ENCODE measurements at regions of chr2 and their contacts with region 1.

Region 1: DNA sequence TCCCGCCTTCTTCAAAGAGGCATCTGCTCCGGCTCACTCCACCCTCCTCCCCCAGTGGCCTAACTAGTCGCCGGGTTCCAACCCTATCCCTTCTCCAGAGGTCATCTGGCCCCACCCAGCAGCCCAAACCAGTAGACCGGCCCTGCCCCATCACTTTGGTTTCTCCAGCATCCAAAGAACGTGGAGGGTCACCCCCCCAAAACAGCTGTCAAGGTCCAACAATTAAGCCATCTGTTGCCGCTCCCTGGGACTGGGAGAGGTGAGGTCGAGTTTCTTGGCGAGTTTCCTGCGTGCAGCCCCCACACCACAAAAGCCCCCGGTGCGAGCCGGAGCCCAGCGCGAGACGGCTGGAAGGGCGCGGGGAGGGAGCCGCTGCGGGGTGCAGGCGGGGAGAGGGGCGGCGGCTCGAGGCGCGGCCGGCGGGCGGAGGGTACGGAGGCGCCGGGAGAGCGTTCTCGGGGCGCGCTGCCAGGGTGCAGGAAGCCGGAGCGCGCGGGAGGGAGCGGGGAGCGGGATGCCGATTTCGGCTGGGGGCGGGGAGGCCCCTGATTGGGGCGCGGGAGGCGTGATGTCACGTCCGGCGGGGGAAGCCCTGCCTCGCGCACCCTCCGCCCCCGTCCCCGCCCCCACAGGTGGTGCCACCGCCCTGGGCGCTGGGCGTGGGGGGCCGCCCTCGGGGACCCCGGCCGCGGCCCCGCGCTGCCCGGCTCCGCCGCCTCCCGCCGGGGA is 571 bp upstream of the GPC1 start:
- H3K4me3 Mint-ChIP-seq: peak overlapping the region; percentile 67
- H3K27ac Mint-ChIP-seq: no peak overlapping the region
- H3K4me1 Mint-ChIP-seq: peaks cover 6% of the 10 kb centered on the region
- H3K27me3 Mint-ChIP-seq: peaks cover 59% of the 10 kb centered on the region

Region 2: GRCh38 chr2:240232961-240233893 is 201.7 kb before region 1 on chr2:
- intact Hi-C with region 1: loop called (anchors 5 kb)
- H3K4me3 Mint-ChIP-seq: no peak overlapping the region
- H3K27ac Mint-ChIP-seq: no peak overlapping the region
- H3K4me1 Mint-ChIP-seq: no peaks in the 10 kb centered on the region
- H3K27me3 Mint-ChIP-seq: peaks cover 9% of the 10 kb centered on the region